Endothelial cell of umbilical vein (primary cell): ENCODE measurements at regions of chr16 and their contacts with region 1.

Region 1: DNA sequence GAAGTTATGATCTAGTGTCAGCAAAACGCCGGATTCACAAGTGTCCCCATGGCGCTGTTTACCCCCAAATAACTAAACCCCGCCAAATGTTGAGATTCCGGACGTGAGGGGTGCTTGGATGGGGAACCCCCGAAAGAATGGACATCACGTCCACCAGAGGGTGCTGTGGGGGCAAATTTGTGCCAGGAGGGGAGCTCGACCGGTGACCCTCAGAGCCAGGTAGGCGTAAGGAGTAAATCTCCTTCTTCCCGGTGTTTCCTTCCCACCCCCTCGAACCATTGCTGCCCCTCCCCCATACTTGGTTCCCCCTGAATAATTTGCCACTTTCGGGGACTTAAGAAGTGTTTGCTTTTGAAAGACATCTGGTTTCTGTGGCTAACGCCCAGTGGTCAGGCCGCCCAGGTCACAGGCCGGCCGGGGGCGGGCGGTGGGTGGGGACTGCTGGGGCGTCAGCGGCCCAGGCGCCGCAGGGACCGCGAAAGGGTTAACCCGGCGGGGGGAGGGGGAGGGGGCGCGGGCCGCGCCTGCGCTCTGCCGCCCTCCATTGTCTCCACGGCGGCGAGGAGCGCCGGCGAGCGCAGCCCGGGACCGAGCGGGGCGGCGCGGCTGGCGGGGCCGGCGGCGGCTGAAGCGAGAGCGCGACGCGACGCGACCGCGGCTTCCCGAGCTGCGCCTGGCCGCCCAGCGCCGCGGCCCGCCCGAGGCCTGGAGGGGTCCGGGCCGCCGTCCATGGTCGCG is at the start of gene ZNRF1:
- DNase-seq: peak; percentile 83
- H3K4me3 ChIP-seq: peak within 1 kb of the TSS; percentile 61 to 82 (median 63)
- H3K27ac ChIP-seq: peak within 1 kb of the TSS; percentile 23
- H3K4me1 ChIP-seq: peaks cover 21% of the 10 kb centered on the region
- H3K27me3 ChIP-seq: no peaks in the 10 kb centered on the region
- CTCF ChIP-seq: peak; percentile 55 to 72
- POLR2A ChIP-seq: peak; percentile 75
- total RNA-seq, gene ZNRF1: 33.2 and 34.9 TPM in 2 replicates

Region 2: DNA sequence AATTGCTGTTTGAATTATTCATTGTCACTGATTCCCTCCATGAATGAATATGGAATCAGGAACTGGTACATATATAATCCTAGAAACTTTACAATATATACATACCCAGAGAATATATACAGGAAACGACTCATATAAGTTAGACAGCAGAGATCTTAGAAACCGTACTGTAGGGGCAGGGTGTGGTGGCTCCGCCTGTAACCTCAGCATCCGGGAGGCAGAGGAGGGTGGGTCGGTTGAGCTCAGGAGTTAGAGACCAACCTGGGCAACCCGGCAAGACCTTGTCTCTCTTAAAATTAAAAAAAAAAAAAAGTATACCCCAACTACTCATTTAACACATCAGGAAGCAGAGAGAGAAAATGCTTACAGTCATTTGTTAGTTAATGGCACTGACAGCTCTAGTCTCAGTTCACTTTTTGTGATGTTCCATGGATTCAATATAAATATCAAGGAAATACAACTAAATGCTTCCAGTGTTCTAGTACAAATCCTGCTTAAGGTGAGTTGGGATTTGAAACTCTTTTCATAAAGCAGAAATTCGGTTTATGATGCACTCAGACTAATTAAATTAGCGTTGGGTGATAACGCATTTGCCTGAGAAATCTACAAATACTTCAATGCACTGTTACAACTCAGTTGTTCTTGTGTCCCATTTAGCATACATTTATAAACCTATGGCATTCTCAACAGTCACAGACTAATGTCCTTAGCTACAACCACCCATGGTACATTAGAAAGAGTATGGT is 397.4 kb before region 1 on chr16:
- CTCF ChIA-PET with region 1: no interaction called
- POLR2A ChIA-PET with region 1: no interaction called
- dilution Hi-C with region 1: no loop called
- intact Hi-C with region 1: no loop called
- DNase-seq: peak; percentile 13
- H3K4me3 ChIP-seq: no peak overlapping the region
- H3K27ac ChIP-seq: no peak overlapping the region
- H3K4me1 ChIP-seq: peaks cover 32% of the 10 kb centered on the region
- H3K27me3 ChIP-seq: no peaks in the 10 kb centered on the region
- CTCF ChIP-seq: no peak
- POLR2A ChIP-seq: no peak

Region 3: GRCh38 chr16:74984535-74985296 is 13.9 kb before region 1 on chr16 and contains the start of gene WDR59:
- CTCF ChIA-PET with region 1: interaction called, 22 read pairs
- POLR2A ChIA-PET with region 1: no interaction called
- dilution Hi-C with region 1: no loop called
- intact Hi-C with region 1: loop called (anchors 1 kb)
- DNase-seq: peak; percentile 99
- H3K4me3 ChIP-seq: peak within 1 kb of the TSS; percentile 41 to 89 (median 73)
- H3K27ac ChIP-seq: peak within 1 kb of the TSS; percentile 42
- H3K4me1 ChIP-seq: no peaks in the 10 kb centered on the region
- H3K27me3 ChIP-seq: no peaks in the 10 kb centered on the region
- CTCF ChIP-seq: no peak
- POLR2A ChIP-seq: peak; percentile 84
- total RNA-seq, gene WDR59: 60.0 and 62.2 TPM in 2 replicates

Region 4: DNA sequence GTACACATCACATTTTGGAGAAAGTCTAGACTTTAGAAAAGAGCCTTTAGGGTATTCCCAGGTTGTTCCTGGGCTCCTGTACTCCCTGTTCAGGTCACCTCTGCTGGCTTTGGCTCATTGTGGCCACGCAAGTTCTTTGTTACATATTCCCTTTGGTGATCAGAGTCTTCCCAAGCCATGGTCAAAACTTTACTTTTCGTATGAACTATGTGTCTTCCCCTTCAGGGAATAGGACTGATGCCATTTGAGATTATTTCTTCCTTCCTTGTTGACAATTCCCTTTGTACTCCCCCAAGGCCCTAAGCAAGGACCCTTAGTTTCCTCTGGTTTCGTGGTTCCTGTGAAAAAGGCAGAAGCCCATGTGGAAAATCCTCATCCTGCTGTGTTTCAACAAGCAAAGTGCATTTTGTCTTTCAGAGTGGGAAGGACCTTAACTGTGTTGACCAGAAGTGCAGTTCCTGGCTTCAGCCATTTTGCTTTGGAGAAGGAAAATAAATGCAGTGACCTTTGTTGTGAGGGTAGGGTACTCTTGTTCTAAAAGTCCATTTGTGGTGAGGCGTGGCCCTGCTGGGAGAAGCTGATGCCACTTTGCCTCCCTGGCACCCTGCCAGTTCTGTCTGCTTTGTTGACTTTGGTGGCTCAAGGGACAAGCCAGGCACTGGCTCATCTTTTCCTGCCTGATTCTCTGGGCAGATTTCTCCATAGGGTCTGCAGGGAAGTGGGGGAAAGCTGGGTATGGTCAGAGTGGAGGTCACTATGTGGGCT is 55.3 kb after region 1 on chr16:
- CTCF ChIA-PET with region 1: no interaction called
- POLR2A ChIA-PET with region 1: no interaction called
- dilution Hi-C with region 1: no loop called
- intact Hi-C with region 1: no loop called
- DNase-seq: peak; percentile 21
- H3K4me3 ChIP-seq: no peak overlapping the region
- H3K27ac ChIP-seq: no peak overlapping the region
- H3K4me1 ChIP-seq: peaks cover 7% of the 10 kb centered on the region
- H3K27me3 ChIP-seq: no peaks in the 10 kb centered on the region
- CTCF ChIP-seq: no peak
- POLR2A ChIP-seq: no peak

Region 5: DNA sequence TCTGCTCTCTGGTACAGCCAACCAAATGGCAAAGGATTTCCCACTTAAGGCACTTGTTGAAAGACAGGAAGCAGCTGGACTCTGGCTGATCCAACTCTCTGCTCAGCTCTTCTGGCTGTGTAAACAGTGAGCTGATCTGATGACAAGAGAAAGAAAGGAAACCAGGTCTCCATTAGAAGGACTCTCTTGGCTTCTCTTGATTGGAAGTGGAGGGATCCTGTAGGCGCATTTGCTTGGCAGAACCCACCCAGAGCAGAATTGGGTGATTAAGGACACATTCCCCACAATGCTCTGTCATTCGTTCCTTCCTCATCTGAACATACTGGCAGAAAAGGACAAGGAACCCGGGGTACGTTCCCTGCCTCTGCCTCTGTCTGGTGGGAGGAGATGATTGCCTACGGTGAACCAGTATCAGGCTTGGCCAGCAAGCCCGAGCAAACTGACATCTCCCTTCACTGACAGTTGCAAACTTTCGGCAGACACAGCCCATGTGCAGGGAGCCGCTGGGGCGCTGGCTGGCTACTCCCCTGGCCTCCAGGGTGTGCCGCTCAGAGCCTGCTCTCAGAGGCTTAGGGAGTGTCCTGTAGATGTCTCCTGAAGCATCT is 88.8 kb after region 1 on chr16:
- CTCF ChIA-PET with region 1: interaction called, 28 read pairs
- POLR2A ChIA-PET with region 1: no interaction called
- dilution Hi-C with region 1: no loop called
- intact Hi-C with region 1: no loop called
- DNase-seq: peak; percentile 96
- H3K4me3 ChIP-seq: no peak overlapping the region
- H3K27ac ChIP-seq: peak overlapping the region; percentile 45
- H3K4me1 ChIP-seq: peaks cover 26% of the 10 kb centered on the region
- H3K27me3 ChIP-seq: no peaks in the 10 kb centered on the region
- CTCF ChIP-seq: no peak
- POLR2A ChIP-seq: peak; percentile 71

Region 6: GRCh38 chr16:75105306-75106061 is 106.8 kb after region 1 on chr16:
- CTCF ChIA-PET with region 1: interaction called, 317 read pairs
- POLR2A ChIA-PET with region 1: interaction called, 3 read pairs
- dilution Hi-C with region 1: no loop called
- intact Hi-C with region 1: no loop called
- DNase-seq: no peak
- H3K4me3 ChIP-seq: no peak overlapping the region
- H3K27ac ChIP-seq: no peak overlapping the region
- H3K4me1 ChIP-seq: peaks cover 15% of the 10 kb centered on the region
- H3K27me3 ChIP-seq: no peaks in the 10 kb centered on the region
- CTCF ChIP-seq: no peak
- POLR2A ChIP-seq: no peak

Region 7: GRCh38 chr16:75148311-75149195 is 149.9 kb after region 1 on chr16 and contains the start of gene ZFP1:
- CTCF ChIA-PET with region 1: interaction called, 3 read pairs
- POLR2A ChIA-PET with region 1: no interaction called
- dilution Hi-C with region 1: no loop called
- intact Hi-C with region 1: loop called (anchors 1 kb)
- DNase-seq: peak; percentile 90
- H3K4me3 ChIP-seq: peak within 1 kb of the TSS; percentile 52 to 97 (median 71)
- H3K27ac ChIP-seq: peak within 1 kb of the TSS; percentile 72
- H3K4me1 ChIP-seq: peaks cover 6% of the 10 kb centered on the region
- H3K27me3 ChIP-seq: no peaks in the 10 kb centered on the region
- CTCF ChIP-seq: no peak
- POLR2A ChIP-seq: peak; percentile 33
- total RNA-seq, gene ZFP1: 9.8 and 13.9 TPM in 2 replicates

Region 8: GRCh38 chr16:76653390-76654026 is 1654.9 kb after region 1 on chr16:
- CTCF ChIA-PET with region 1: no interaction called
- POLR2A ChIA-PET with region 1: no interaction called
- dilution Hi-C with region 1: no loop called
- intact Hi-C with region 1: no loop called
- DNase-seq: peak; percentile 4
- H3K4me3 ChIP-seq: no peak overlapping the region
- H3K27ac ChIP-seq: no peak overlapping the region
- H3K4me1 ChIP-seq: no peaks in the 10 kb centered on the region
- H3K27me3 ChIP-seq: no peaks in the 10 kb centered on the region
- CTCF ChIP-seq: peak in 1 of 2 donors; percentile 32
- POLR2A ChIP-seq: no peak